ENCODE measurements at regions of chr6 and their contacts with region 1.

Region 1: DNA sequence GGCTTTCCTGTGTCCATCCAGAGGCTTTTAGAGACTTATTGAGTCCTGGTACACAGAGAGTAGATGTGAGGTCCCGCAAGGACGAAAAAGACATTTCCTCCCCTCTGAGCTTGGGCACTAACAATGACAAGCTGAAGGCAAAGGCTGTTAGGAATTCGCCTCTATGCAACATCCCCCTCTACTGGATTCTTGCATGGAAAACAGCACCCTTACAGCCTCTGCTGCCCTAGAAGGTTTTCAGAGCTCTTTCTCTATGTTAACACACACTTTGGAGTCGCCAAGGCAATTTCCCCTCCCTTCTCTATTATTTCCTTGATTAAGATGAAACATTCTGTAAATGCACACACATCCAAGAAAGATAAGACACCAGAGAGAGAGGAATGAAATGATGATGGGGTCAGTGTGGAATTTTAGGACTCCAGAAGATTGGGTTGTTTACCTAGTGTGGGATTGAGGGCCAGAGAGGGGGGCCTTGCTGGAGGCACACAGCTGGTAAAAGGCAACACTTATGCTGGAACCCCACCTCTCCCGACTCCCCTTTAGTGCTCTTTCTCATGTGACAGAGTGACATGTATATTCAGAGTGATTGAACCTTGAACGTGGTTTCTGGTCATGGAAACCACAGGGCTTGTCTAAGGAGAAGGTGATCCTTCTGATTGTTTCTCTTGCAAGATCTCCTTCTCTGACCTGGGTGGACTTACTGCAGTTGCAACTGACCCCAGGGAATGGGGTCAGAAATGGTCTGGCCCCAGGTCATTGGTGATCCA is 300.7 kb downstream of the CLIC5 start:
- DNase-seq: no peak

Region 2: DNA sequence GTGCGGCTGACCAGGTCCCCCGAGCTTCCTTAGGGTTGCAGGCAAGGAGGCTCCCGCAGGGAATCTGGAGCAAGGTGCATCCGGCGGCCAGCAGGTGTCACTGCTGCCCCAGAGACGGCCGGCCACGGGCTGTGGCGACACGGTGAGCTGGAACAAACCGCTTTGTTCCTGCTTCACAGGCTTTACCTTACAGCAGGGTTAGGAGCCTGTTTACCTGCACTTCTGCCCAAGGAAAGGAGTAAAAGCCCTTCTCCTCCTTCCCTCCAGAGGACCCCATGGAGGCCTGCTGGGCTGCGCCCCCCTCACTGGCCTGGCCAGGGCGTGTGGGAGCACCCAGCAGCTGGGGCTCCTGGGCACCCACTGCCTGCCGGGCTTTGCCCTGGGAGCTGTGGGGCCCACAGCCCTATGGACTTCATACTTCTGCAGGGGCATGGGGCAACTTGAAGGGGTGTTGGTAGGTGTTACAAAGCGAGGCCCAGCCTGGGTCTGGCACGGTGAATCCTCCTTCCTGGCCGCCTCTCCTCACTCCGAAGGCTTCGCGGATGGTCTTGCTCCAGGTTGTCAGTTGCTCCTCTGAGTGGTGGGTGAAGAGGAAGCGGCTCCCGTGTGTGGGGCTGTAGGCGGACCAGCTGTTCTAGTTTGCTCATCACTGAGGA is 1239.0 kb before region 1 on chr6:
- intact Hi-C with region 1: loop called in 1 of 2 experiments (anchors 10 kb)
- DNase-seq: peak; percentile 93

Region 3: DNA sequence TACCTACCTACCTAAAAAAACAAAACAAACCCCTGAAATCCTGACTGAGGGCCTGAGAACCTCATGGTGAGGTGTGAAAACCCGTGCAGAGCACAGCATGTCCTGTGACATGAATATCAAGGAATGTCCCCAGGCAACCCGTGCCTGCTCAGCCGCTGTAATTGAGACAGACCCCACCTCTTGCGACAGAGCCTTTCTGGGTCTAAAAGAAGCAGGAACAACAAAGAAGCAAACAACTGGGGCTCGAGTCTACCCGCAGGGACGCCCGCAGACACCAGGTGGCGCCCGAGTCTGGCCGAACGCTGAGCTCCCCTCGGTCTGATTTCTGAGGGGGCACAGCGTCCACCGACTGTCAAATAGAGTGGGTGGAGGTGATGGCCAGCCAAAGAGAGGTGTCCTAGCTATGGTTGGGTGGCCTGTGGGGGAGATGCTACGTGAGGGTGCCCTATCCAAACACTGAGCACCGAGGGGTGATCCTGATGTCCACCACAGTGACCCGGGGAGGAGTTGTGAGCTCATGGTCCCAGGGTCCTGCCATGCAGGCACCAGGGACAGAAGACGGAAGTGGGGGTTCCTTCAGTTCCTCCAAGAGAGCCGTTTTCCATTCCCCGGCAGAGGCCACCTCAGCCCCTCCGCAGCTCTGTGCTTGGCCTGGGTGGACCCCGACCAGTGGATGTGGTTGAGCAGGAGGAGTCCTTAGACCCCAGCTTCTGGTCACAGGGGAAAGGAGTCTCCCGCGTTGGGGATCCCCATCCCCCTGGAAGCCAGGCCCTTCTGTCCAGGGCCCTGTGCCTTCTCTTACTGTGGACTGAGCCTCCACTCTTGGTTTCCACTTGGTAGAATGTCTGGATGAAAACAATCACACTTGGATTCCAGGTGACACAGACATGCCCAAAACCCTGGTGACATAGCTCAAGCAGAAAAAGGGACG is 1059.2 kb before region 1 on chr6:
- intact Hi-C with region 1: loop called (anchors 5 to 10 kb)
- DNase-seq: peak; percentile 92

Region 4: DNA sequence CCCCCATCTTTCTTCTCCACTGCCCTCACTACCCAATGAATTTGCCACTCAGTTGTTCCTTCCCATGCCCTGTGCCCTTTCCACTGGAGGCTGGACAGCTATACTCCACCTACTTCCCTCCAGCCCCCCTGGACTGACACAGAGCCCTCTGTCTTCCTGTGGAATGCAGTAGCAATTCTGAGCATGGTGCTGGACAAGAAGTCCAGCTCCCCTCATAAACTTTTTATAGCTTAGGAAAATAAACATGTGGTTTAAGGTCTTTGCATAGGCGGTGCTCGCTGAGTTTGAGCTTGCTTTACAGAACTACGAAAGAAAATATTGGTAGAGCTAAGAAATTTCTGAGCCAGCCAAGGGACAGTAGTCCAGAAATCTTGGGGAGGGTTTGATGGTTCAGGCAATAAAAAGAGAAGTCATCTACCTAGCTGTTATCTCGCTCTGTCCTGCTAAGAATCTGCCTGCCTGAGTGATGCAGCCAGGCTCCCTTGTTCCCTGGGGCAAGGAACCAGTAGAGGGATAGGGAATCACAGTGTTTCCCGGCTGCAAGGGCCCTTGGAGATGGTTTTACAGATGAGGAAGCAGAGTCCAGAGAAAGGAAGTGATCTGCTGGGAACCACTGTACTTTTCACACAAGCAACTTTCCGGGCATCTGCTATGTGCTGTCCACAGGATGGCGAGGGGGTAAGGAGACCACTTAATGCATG is 984.1 kb before region 1 on chr6:
- intact Hi-C with region 1: loop called in 1 of 2 experiments (anchors 5 kb)
- DNase-seq: no peak

Measured in posterior vena cava (tissue), 2 donors.